Heart right ventricle (tissue), 16 donors: ENCODE measurements at regions of chr3 and their contacts with region 1.

Region 1: GRCh38 chr3:169668957-169669681 is 5.6 kb upstream of the MECOM start:
- DNase-seq: peak; percentile 73 to 82
- ATAC-seq: peak; percentile 97 to 99 (median 98)
- H3K4me3 ChIP-seq: peak overlapping the region; percentile 15 to 73 (median 56)
- H3K27ac ChIP-seq: peak overlapping the region in 9 of 10 donors; percentile 41 to 77 (median 69)
- H3K4me1 ChIP-seq: peaks cover 0 to 30% (median 21%) of the 10 kb centered on the region in 9 donors
- H3K27me3 ChIP-seq: peaks cover 0 to 86% (median 64%) of the 10 kb centered on the region in 7 donors
- CTCF ChIP-seq: peak; percentile 63 to 95 (median 85)

Region 2: DNA sequence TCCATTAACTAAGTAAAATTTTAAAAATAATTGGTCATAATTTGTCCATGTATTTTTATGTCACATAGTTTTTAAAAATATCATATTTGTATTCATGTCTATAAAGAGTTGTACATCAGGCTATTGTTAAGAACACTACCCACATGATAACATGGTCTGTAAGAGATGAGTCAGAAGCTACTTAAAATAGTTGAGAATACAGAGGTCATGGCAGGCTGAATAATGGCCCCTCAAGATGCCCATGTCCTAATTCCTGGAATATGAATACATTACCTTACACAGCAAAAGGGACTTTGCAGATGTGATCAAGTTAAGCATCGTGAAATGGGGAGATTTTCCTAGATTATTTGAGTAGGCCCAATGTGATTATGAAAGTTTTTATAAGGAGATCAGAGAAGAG is 790.5 kb before region 1 on chr3:
- intact Hi-C with region 1: loop called in 2 of 10 experiments (anchors 5 to 10 kb)
- DNase-seq: no peak
- ATAC-seq: peak in 3 of 8 donors; percentile 40 to 86 (median 64)
- H3K4me3 ChIP-seq: no peak overlapping the region
- H3K27ac ChIP-seq: peak overlapping the region in 3 of 10 donors; percentile 76 to 79 (median 78)
- H3K4me1 ChIP-seq: peaks cover 0 to 45% (median 8%) of the 10 kb centered on the region in 9 donors
- H3K27me3 ChIP-seq: no peaks in the 10 kb centered on the region
- CTCF ChIP-seq: no peak

Region 3: GRCh38 chr3:169008776-169009358 is 660.3 kb before region 1 on chr3:
- intact Hi-C with region 1: no loop called
- DNase-seq: no peak
- ATAC-seq: no peak
- H3K4me3 ChIP-seq: no peak overlapping the region
- H3K27ac ChIP-seq: no peak overlapping the region
- H3K4me1 ChIP-seq: no peaks in the 10 kb centered on the region
- H3K27me3 ChIP-seq: no peaks in the 10 kb centered on the region
- CTCF ChIP-seq: no peak

Region 4: GRCh38 chr3:169041677-169042171 is 627.4 kb before region 1 on chr3:
- intact Hi-C with region 1: loop called in 7 of 10 experiments (anchors 5 to 10 kb)
- DNase-seq: no peak
- ATAC-seq: peak in 6 of 8 donors; percentile 20 to 79 (median 68)
- H3K4me3 ChIP-seq: peak overlapping the region in 3 of 10 donors; percentile 11 to 24 (median 13)
- H3K27ac ChIP-seq: peak overlapping the region in 6 of 10 donors; percentile 10 to 38 (median 27)
- H3K4me1 ChIP-seq: peaks cover 0 to 7% (median 0%) of the 10 kb centered on the region in 9 donors
- H3K27me3 ChIP-seq: no peaks in the 10 kb centered on the region
- CTCF ChIP-seq: peak; percentile 27 to 75 (median 59)

Region 5: GRCh38 chr3:169149349-169149890 is 519.7 kb before region 1 on chr3:
- intact Hi-C with region 1: loop called in 6 of 10 experiments (anchors 2 to 5 kb)
- DNase-seq: peak; percentile 84 to 85
- ATAC-seq: peak; percentile 80 to 91 (median 82)
- H3K4me3 ChIP-seq: peak overlapping the region in 9 of 10 donors; percentile 13 to 69 (median 61)
- H3K27ac ChIP-seq: peak overlapping the region; percentile 26 to 96 (median 78)
- H3K4me1 ChIP-seq: peaks cover 0 to 38% (median 16%) of the 10 kb centered on the region in 9 donors
- H3K27me3 ChIP-seq: peaks cover 0 to 78% (median 32%) of the 10 kb centered on the region in 7 donors
- CTCF ChIP-seq: peak; percentile 67 to 93 (median 86)

Region 6: GRCh38 chr3:169227911-169228310 is 441.2 kb before region 1 on chr3:
- intact Hi-C with region 1: loop called in 2 of 10 experiments (anchors 5 to 10 kb)
- DNase-seq: no peak
- ATAC-seq: peak; percentile 42 to 83 (median 62)
- H3K4me3 ChIP-seq: peak overlapping the region in 4 of 10 donors; percentile 1 to 20 (median 4)
- H3K27ac ChIP-seq: peak overlapping the region in 6 of 10 donors; percentile 30 to 58 (median 47)
- H3K4me1 ChIP-seq: peaks cover 0 to 34% (median 14%) of the 10 kb centered on the region in 9 donors
- H3K27me3 ChIP-seq: no peaks in the 10 kb centered on the region
- CTCF ChIP-seq: no peak

Region 7: GRCh38 chr3:169390271-169391230 is 278.6 kb before region 1 on chr3:
- intact Hi-C with region 1: loop called in 4 of 10 experiments (anchors 5 to 10 kb)
- DNase-seq: no peak
- ATAC-seq: peak in 1 of 8 donors; percentile 43
- H3K4me3 ChIP-seq: no peak overlapping the region
- H3K27ac ChIP-seq: peak overlapping the region in 3 of 10 donors; percentile 11 to 86 (median 59)
- H3K4me1 ChIP-seq: peaks cover 0 to 38% (median 31%) of the 10 kb centered on the region in 9 donors
- H3K27me3 ChIP-seq: no peaks in the 10 kb centered on the region
- CTCF ChIP-seq: peak in 3 of 9 donors; percentile 6 to 20 (median 8)

Region 8: GRCh38 chr3:169744366-169745054 is 75.4 kb after region 1 on chr3:
- intact Hi-C with region 1: loop called in 2 of 10 experiments (anchors 2 to 10 kb)
- DNase-seq: no peak
- ATAC-seq: peak in 2 of 8 donors; percentile 39 to 52
- H3K4me3 ChIP-seq: no peak overlapping the region
- H3K27ac ChIP-seq: no peak overlapping the region
- H3K4me1 ChIP-seq: peaks cover 0 to 3% (median 0%) of the 10 kb centered on the region in 9 donors
- H3K27me3 ChIP-seq: peaks cover 0 to 26% (median 5%) of the 10 kb centered on the region in 7 donors
- CTCF ChIP-seq: peak; percentile 12 to 72 (median 52)

Region 9: GRCh38 chr3:169879845-169880575 is 210.9 kb after region 1 on chr3:
- intact Hi-C with region 1: no loop called
- DNase-seq: no peak
- ATAC-seq: peak in 2 of 8 donors; percentile 18 to 28
- H3K4me3 ChIP-seq: no peak overlapping the region
- H3K27ac ChIP-seq: no peak overlapping the region
- H3K4me1 ChIP-seq: peaks cover 0 to 12% (median 0%) of the 10 kb centered on the region in 9 donors
- H3K27me3 ChIP-seq: no peaks in the 10 kb centered on the region
- CTCF ChIP-seq: no peak